B cell (primary cell): ENCODE measurements at regions of chr12 and their contacts with region 1.

Region 1: DNA sequence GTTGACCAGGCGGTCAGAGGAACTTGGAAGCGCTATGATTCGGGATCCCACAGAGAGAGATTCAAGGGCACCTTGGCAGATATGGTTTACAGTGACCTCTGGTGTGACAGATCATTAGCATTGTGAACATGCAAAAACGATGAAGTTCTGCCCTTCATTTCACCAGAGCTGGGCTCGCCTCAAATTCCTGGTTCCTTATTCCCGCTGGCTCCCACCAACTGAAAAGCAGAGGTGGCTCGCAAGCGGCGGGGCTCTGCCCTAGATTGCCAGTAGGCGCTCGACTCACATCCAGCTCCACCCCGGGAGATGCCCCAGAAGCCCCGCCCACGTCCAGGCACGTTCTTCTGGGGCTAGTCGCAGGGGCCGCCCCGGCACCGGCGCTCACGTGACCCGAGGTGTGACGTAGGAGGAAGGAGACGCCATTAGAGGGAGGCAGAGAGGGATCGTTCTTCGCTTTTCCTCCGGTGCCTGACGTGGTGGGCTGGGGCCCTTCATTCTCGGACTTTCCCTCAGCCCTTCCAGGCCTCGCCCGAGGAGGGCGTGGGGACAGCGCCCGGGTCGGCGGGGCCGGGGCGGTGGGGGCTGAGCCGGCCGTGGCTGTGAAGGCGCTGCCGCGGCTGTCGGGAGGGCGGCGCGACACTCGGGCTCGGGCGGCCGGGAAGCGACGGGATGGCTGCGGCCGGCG is at the start of gene RAB21:
- DNase-seq: peak; percentile 98
- ATAC-seq: peak; percentile 91
- H3K4me3 ChIP-seq: peak within 1 kb of the TSS; percentile 76 to 89 (median 86)
- H3K4me3 Mint-ChIP-seq: peak within 1 kb of the TSS; percentile 96
- H3K27ac ChIP-seq: peak within 1 kb of the TSS; percentile 91 to 97
- H3K27ac Mint-ChIP-seq: peak within 1 kb of the TSS; percentile 98
- H3K4me1 ChIP-seq: peaks cover 17 to 23% of the 10 kb centered on the region in 2 donors
- H3K4me1 Mint-ChIP-seq: peaks cover 38% of the 10 kb centered on the region
- H3K27me3 ChIP-seq: no peaks in the 10 kb centered on the region
- H3K27me3 Mint-ChIP-seq: peaks cover 13% of the 10 kb centered on the region
- CTCF ChIP-seq: peak; percentile 35
- total RNA-seq, gene RAB21: 69.4 and 83.7 TPM in 2 replicates

Region 2: GRCh38 chr12:71685914-71686665 is 68.5 kb before region 1 on chr12 and contains the start of gene TMEM19:
- CTCF ChIA-PET with region 1: interaction called, 68 read pairs
- POLR2A ChIA-PET with region 1: interaction called, 17 read pairs
- intact Hi-C with region 1: loop called (anchors 1 kb)
- DNase-seq: peak; percentile 94
- ATAC-seq: peak; percentile 91
- H3K4me3 ChIP-seq: peak within 1 kb of the TSS; percentile 70 to 99 (median 81)
- H3K4me3 Mint-ChIP-seq: peak within 1 kb of the TSS; percentile 97
- H3K27ac ChIP-seq: peak within 1 kb of the TSS; percentile 83 to 95
- H3K27ac Mint-ChIP-seq: peak within 1 kb of the TSS; percentile 96
- H3K4me1 ChIP-seq: peaks cover 53 to 54% of the 10 kb centered on the region in 2 donors
- H3K4me1 Mint-ChIP-seq: peaks cover 49% of the 10 kb centered on the region
- H3K27me3 ChIP-seq: no peaks in the 10 kb centered on the region
- H3K27me3 Mint-ChIP-seq: no peaks in the 10 kb centered on the region
- CTCF ChIP-seq: no peak
- total RNA-seq, gene TMEM19: 39.4 and 45.5 TPM in 2 replicates

Region 3: GRCh38 chr12:71772735-71773134 is 18.1 kb after region 1 on chr12:
- CTCF ChIA-PET with region 1: interaction called, 5 read pairs
- POLR2A ChIA-PET with region 1: no interaction called
- intact Hi-C with region 1: loop called (anchors 2 kb)
- DNase-seq: no peak
- ATAC-seq: no peak
- H3K4me3 ChIP-seq: no peak overlapping the region
- H3K4me3 Mint-ChIP-seq: no peak overlapping the region
- H3K27ac ChIP-seq: no peak overlapping the region
- H3K27ac Mint-ChIP-seq: no peak overlapping the region
- H3K4me1 ChIP-seq: peaks cover 2 to 9% of the 10 kb centered on the region in 2 donors
- H3K4me1 Mint-ChIP-seq: peaks cover 17% of the 10 kb centered on the region
- H3K27me3 ChIP-seq: no peaks in the 10 kb centered on the region
- H3K27me3 Mint-ChIP-seq: no peaks in the 10 kb centered on the region
- CTCF ChIP-seq: no peak

Region 4: GRCh38 chr12:71780237-71780822 is 25.7 kb after region 1 on chr12:
- CTCF ChIA-PET with region 1: interaction called, 5 read pairs
- POLR2A ChIA-PET with region 1: no interaction called
- intact Hi-C with region 1: loop called (anchors 2 kb)
- DNase-seq: peak; percentile 60
- ATAC-seq: peak; percentile 28
- H3K4me3 ChIP-seq: no peak overlapping the region
- H3K4me3 Mint-ChIP-seq: no peak overlapping the region
- H3K27ac ChIP-seq: peak overlapping the region in 1 of 2 donors; percentile 49
- H3K27ac Mint-ChIP-seq: no peak overlapping the region
- H3K4me1 ChIP-seq: peaks cover 6 to 13% of the 10 kb centered on the region in 2 donors
- H3K4me1 Mint-ChIP-seq: peaks cover 13% of the 10 kb centered on the region
- H3K27me3 ChIP-seq: no peaks in the 10 kb centered on the region
- H3K27me3 Mint-ChIP-seq: no peaks in the 10 kb centered on the region
- CTCF ChIP-seq: peak; percentile 83

Region 5: DNA sequence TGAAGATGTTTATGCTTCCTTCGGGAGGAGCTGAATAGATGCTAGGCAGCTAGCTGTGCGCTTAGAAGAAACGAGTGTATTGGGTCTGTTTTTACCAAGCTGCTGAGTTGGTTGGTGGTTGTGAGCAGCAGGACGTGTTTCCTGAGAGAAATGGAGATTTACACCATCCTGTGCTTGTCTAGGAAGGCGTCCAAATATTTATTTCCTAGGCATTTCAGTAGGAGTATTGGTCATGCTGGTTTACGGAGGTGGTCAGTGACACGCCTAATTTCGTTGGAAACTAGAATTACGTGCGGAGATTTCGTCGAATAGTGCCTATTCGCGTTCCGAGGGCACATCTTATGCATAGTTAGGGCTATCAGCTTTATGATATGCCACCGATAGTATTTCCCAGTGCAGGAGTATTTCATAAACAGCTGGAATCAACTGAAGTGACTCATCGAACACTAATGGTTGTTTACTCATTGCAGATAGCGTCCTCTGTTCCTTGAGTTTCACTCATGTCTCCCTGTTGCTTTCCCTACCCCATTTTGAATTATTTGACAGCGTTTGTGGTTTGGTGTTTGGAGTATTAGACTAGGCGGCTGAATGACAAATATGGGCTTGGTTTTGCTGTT is 85.7 kb after region 1 on chr12:
- CTCF ChIA-PET with region 1: interaction called, 3 read pairs
- POLR2A ChIA-PET with region 1: interaction called, 6 read pairs
- intact Hi-C with region 1: loop called (anchors 1 kb)
- DNase-seq: no peak
- ATAC-seq: no peak
- H3K4me3 ChIP-seq: peak overlapping the region; percentile 61 to 90 (median 80)
- H3K4me3 Mint-ChIP-seq: peak overlapping the region; percentile 94
- H3K27ac ChIP-seq: peak overlapping the region; percentile 99
- H3K27ac Mint-ChIP-seq: peak overlapping the region; percentile 95
- H3K4me1 ChIP-seq: peaks cover 21% of the 10 kb centered on the region in 2 donors
- H3K4me1 Mint-ChIP-seq: peaks cover 33% of the 10 kb centered on the region
- H3K27me3 ChIP-seq: no peaks in the 10 kb centered on the region
- H3K27me3 Mint-ChIP-seq: peaks cover 2% of the 10 kb centered on the region
- CTCF ChIP-seq: no peak